ENCODE measurements at regions of chr4 and their contacts with region 1.

Region 1: DNA sequence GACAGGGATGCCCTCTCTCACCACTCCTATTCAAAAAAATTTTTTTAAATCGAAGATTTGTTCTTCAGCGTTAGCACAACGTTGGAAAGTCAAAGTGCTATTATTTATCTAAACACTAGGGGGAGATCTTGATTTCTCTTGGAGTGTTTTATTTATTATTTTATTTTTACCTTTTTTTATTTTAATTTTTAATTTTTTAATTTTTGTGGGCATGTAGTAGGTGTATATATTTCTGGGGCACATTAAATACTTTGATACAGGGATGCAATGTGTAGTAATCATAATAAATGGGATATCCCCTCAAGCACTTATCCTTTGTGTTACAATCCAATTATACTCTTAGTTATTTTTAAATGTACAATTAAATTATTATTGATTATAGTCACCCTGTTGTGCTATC is 37.4 kb upstream of the SLC10A4 start:
- DNase-seq: peak in 3 of 9 donors; percentile 6 to 9 (median 8)
- ATAC-seq: no peak
- H3K4me3 ChIP-seq: no peak overlapping the region
- H3K4me3 Mint-ChIP-seq: no peak overlapping the region
- H3K27ac ChIP-seq: no peak overlapping the region
- H3K27ac Mint-ChIP-seq: no peak overlapping the region
- H3K4me1 ChIP-seq: no peaks in the 10 kb centered on the region
- H3K4me1 Mint-ChIP-seq: peaks cover 0 to 4% (median 0%) of the 10 kb centered on the region in 7 donors
- H3K27me3 ChIP-seq: no peaks in the 10 kb centered on the region
- H3K27me3 Mint-ChIP-seq: peaks cover 2 to 11% (median 4%) of the 10 kb centered on the region in 5 donors

Region 2: DNA sequence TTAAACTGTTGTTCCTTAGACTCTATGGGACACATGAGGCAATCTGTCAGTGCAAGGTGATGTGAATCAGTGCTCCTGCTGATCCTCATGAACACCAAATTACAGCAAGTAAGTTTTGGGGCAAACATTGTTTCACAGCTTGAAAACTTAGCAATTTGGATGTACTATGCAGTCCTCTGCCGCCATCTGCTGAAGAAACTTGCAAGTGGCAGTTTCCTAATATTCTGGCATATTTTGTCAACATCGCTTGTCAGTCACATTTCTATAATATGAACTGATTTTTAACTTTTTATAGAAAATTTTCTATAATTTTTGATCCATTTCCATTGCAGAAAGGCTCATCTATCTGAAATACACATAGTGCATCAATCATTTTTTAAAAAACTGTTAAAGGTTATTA is 100.6 kb after region 1 on chr4:
- CTCF ChIA-PET with region 1: no interaction called
- POLR2A ChIA-PET with region 1: no interaction called
- intact Hi-C with region 1: loop called in 1 of 2 experiments (anchors 5 kb)
- DNase-seq: peak in 5 of 9 donors; percentile 4 to 31 (median 20)
- ATAC-seq: peak; percentile 44
- H3K4me3 ChIP-seq: no peak overlapping the region
- H3K4me3 Mint-ChIP-seq: no peak overlapping the region
- H3K27ac ChIP-seq: no peak overlapping the region
- H3K27ac Mint-ChIP-seq: peak overlapping the region in 2 of 9 donors; percentile 49 to 56
- H3K4me1 ChIP-seq: no peaks in the 10 kb centered on the region
- H3K4me1 Mint-ChIP-seq: peaks cover 0 to 2% (median 0%) of the 10 kb centered on the region in 7 donors
- H3K27me3 ChIP-seq: no peaks in the 10 kb centered on the region
- H3K27me3 Mint-ChIP-seq: no peaks in the 10 kb centered on the region